Common myeloid progenitor, CD34-positive (primary cell): ENCODE measurements at regions of chr1 and their contacts with region 1.

Region 1: DNA sequence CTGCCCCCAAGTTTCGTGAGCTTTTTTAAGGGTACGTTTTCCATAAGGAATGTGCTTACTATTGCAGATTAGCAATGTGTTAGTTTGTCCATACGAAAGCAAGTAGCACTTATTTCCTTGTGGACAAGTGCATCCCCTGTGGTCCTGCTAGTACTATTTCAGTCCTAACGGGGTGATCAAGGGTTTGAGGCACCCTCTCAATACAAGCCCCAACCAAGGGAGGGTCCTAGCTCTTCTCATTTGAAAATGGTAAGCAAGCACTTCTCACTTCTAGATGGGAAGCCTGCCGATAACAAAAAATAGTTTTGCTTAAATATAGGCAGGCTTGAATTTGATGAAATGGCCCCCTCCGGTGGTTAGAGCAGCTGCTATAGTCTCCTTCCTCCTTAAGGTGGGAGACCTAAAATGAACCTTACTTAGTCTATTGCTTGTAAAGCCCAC is 64.0 kb upstream of the HMCN1 start:
- DNase-seq: peak; percentile 67 to 79 (median 77)
- H3K4me3 ChIP-seq: peak overlapping the region in 1 of 7 experiments; percentile 7
- H3K27ac ChIP-seq: no peak overlapping the region
- H3K4me1 ChIP-seq: peaks cover 5 to 25% (median 9%) of the 10 kb centered on the region in 4 experiments
- H3K27me3 ChIP-seq: no peaks in the 10 kb centered on the region

Region 2: GRCh38 chr1:185170291-185170848 is 499.8 kb before region 1 on chr1:
- CTCF ChIA-PET with region 1: interaction called, 12 read pairs
- POLR2A ChIA-PET with region 1: no interaction called
- DNase-seq: peak; percentile 76 to 89 (median 87)
- H3K4me3 ChIP-seq: peak overlapping the region in 4 of 7 experiments; percentile 4 to 55 (median 44)
- H3K27ac ChIP-seq: no peak overlapping the region
- H3K4me1 ChIP-seq: peaks cover 6 to 10% (median 9%) of the 10 kb centered on the region in 4 experiments
- H3K27me3 ChIP-seq: no peaks in the 10 kb centered on the region

Region 3: DNA sequence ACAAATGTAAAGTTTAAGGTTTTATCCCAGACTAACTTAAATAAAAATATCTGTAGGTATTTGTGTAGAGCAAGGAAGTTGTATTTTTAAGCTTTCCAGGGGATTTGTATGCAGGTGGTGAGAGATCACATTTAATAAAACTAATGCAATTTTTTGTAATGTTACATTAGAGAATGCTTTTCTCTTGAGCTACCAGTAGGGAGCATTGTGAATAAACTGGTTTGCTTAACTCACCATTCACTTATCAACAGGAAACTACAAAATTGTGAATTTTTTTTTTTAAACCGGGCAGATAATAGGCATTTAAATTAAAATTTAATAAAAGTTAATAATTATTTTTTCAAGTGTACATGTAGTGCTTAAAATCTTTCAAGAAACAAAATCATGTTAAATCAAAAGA is 431.8 kb before region 1 on chr1:
- CTCF ChIA-PET with region 1: interaction called, 15 read pairs
- POLR2A ChIA-PET with region 1: no interaction called
- DNase-seq: peak; percentile 22 to 50 (median 33)
- H3K4me3 ChIP-seq: no peak overlapping the region
- H3K27ac ChIP-seq: no peak overlapping the region
- H3K4me1 ChIP-seq: no peaks in the 10 kb centered on the region
- H3K27me3 ChIP-seq: no peaks in the 10 kb centered on the region

Region 4: GRCh38 chr1:185317034-185317885 is 352.9 kb before region 1 on chr1 and contains the start of gene IVNS1ABP:
- CTCF ChIA-PET with region 1: interaction called, 10 read pairs
- POLR2A ChIA-PET with region 1: no interaction called
- DNase-seq: peak; percentile 94 to 98 (median 97)
- H3K4me3 ChIP-seq: peak within 1 kb of the TSS; percentile 69 to 98 (median 94)
- H3K27ac ChIP-seq: peak within 1 kb of the TSS; percentile 86 to 93
- H3K4me1 ChIP-seq: peaks cover 24 to 40% (median 40%) of the 10 kb centered on the region in 4 experiments
- H3K27me3 ChIP-seq: no peaks in the 10 kb centered on the region

Region 5: GRCh38 chr1:185652348-185652747 is 17.9 kb before region 1 on chr1:
- CTCF ChIA-PET with region 1: interaction called, 18 read pairs
- POLR2A ChIA-PET with region 1: no interaction called
- DNase-seq: peak in 1 of 3 donors; percentile 14
- H3K4me3 ChIP-seq: no peak overlapping the region
- H3K27ac ChIP-seq: no peak overlapping the region
- H3K4me1 ChIP-seq: no peaks in the 10 kb centered on the region
- H3K27me3 ChIP-seq: no peaks in the 10 kb centered on the region

Region 6: GRCh38 chr1:185681034-185681633 is 10.9 kb after region 1 on chr1:
- CTCF ChIA-PET with region 1: interaction called, 20 read pairs
- POLR2A ChIA-PET with region 1: no interaction called
- DNase-seq: peak; percentile 55 to 65 (median 61)
- H3K4me3 ChIP-seq: no peak overlapping the region
- H3K27ac ChIP-seq: no peak overlapping the region
- H3K4me1 ChIP-seq: peaks cover 0 to 11% (median 7%) of the 10 kb centered on the region in 4 experiments
- H3K27me3 ChIP-seq: no peaks in the 10 kb centered on the region